Endothelial cell of umbilical vein (primary cell): ENCODE measurements at regions of chr10 and their contacts with region 1.

Region 1: DNA sequence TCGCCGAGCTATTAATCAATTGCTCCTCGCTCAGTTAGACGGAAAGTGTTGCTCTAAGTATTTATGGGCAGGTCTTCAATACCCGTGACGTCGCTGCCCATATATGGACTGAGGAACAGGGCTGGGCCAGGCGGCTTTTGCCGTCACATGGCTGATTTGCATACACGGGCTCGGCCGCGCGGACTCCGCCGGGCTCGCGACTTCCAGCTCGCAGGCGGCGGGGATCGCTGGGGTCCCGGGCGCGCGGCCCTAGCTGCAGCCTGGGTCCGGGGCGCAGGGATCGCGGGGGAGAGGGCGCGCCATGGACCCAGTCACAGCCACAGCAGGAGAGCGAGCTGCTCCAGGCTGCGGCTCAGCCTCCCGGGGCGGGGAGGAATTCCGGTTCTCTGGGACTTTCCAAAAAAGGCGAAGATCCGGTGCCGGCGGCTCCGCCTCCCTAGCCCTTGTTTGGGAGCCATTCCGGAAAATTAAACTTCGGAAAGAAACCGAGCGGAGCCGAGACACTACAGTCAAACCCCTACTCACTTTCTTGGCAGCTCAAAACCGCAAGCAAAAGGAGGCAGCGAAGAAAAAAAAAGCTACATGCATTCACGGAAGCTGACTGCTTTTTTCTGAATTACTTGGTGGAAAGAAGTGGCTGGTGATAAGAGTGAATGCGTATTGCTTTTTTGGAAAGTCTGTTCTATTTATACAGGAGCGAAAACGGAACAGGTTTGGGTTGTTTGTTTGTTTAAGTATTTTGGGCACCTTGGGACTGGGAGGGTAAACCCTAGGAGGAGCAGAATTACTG is at the start of gene EGR2:
- DNase-seq: peak; percentile 91
- H3K4me3 ChIP-seq: peak within 1 kb of the TSS; percentile 45 to 91 (median 51)
- H3K27ac ChIP-seq: peak within 1 kb of the TSS; percentile 32
- H3K4me1 ChIP-seq: peaks cover 24% of the 10 kb centered on the region
- H3K27me3 ChIP-seq: peaks cover 50 to 60% of the 10 kb centered on the region in 2 experiments
- CTCF ChIP-seq: no peak
- POLR2A ChIP-seq: no peak
- total RNA-seq, gene EGR2: 0.46 and 0.67 TPM in 2 replicates

Region 2: DNA sequence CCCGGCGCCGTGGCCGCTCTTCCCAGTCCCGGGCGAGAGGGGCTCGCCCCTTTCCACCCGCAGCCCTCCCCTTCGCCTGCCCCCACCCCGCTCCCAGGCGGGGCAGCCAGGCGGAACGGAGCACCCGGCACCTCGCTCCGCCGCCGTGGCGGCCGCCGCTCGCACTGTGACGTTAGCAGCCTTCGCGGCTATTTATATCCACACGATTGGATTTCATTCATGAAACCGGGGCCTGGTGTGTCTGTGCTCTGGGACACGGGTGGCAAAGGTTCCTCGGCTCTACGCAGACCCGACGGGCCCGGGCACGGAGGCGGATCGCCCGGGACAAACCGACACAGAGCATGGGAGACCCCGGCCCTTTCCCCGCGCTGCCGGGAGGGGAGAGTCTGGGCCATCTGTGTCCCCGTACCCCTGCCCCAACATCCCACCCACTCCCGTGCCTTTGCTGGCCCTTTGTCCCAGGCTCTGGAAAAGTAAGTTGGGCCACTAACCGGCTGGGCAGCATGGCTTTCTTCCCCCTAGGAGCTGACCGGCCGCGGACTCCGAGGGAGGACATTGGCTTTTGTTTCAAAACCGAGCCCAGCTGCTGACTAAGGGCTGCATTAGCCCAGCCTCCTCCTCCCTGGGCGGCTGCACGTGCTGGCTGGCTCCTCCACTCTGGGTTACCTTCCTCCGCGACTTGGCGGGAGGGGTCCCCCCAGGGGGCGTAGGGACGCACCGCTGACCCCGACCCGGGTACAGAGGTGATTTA is 1872.2 kb before region 1 on chr10 and contains the start of gene RHOBTB1:
- CTCF ChIA-PET with region 1: no interaction called
- POLR2A ChIA-PET with region 1: no interaction called
- dilution Hi-C with region 1: no loop called
- intact Hi-C with region 1: loop called (anchors 5 kb)
- DNase-seq: peak; percentile 85
- H3K4me3 ChIP-seq: peak within 1 kb of the TSS; percentile 74 to 91 (median 86)
- H3K27ac ChIP-seq: peak within 1 kb of the TSS; percentile 98
- H3K4me1 ChIP-seq: peaks cover 18% of the 10 kb centered on the region
- H3K27me3 ChIP-seq: no peaks in the 10 kb centered on the region
- CTCF ChIP-seq: no peak
- POLR2A ChIP-seq: peak; percentile 71
- total RNA-seq, gene RHOBTB1: 31.0 and 31.3 TPM in 2 replicates

Region 3: DNA sequence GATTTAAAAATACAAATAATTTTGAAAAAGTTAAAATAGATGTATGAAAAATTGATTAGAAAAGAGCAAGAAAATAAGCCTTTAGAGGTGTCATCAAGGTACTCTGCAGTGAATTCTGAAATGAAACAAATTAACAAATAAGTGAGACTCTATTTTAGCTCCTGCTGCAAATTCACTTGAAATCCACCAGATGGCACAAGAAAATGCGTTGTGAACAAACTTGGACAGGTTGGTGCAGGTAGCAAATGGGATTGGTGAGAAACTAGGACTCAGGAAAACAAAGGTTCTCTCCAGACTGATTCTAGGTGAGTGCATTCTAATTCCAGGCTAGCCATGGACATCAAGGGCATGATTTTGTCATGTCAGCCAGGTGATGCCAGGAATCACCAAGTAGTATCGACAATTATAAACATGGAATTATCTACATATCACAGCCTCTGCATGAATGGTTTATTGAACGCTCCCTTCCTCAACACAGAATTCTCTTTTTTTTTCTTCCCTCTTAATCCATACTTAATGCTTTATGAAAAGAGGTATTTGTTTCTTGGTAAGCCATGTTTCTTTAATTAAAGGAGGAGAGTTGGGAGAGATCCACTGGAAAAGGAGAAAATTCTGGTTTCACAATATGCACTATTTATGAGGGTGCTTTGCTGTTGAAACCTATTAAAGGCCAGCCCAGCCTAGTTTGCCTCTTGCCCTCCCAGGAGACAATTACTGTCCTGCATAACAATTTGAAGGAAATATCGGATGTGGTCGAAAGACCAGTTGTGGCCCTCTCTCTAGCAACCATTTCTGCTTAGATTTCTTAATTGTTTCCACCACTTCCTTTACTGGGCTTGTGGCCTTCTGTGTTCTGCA is 324.3 kb before region 1 on chr10:
- CTCF ChIA-PET with region 1: interaction called, 6 read pairs
- POLR2A ChIA-PET with region 1: no interaction called
- dilution Hi-C with region 1: no loop called
- intact Hi-C with region 1: loop called (anchors 5 kb)
- DNase-seq: peak; percentile 6
- H3K4me3 ChIP-seq: no peak overlapping the region
- H3K27ac ChIP-seq: no peak overlapping the region
- H3K4me1 ChIP-seq: no peaks in the 10 kb centered on the region
- H3K27me3 ChIP-seq: no peaks in the 10 kb centered on the region
- CTCF ChIP-seq: peak in 1 of 2 donors; percentile 30
- POLR2A ChIP-seq: no peak

Region 4: GRCh38 chr10:62610649-62611229 is 205.8 kb before region 1 on chr10:
- CTCF ChIA-PET with region 1: interaction called, 232 read pairs
- POLR2A ChIA-PET with region 1: no interaction called
- dilution Hi-C with region 1: no loop called
- intact Hi-C with region 1: loop called (anchors 1 kb)
- DNase-seq: peak; percentile 41
- H3K4me3 ChIP-seq: no peak overlapping the region
- H3K27ac ChIP-seq: no peak overlapping the region
- H3K4me1 ChIP-seq: no peaks in the 10 kb centered on the region
- H3K27me3 ChIP-seq: peaks cover 2 to 5% of the 10 kb centered on the region in 2 experiments
- CTCF ChIP-seq: peak; percentile 56 to 82
- POLR2A ChIP-seq: no peak

Region 5: DNA sequence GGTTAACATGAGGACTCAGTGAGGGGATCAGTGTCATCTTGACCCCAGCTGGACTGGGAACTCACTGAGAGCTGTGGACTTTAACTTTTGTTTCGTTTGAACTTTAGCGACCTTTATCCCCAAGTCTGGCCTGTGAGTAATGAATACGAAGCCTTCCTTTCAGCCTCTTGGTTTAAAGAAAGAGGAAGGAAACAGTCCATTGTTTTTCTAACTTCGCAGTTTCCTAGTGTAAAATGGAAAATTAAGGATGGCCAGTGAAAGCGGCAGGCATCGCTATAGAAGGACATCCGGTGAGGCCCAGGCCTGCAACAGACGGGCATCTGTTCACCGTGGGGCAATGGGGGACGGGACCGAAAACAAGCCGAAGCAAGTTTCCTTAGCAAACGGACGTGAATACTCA is 56.1 kb before region 1 on chr10:
- CTCF ChIA-PET with region 1: interaction called, 4 read pairs
- POLR2A ChIA-PET with region 1: interaction called, 4 read pairs
- dilution Hi-C with region 1: no loop called
- intact Hi-C with region 1: loop called (anchors 1 kb)
- DNase-seq: peak; percentile 83
- H3K4me3 ChIP-seq: no peak overlapping the region
- H3K27ac ChIP-seq: peak overlapping the region; percentile 55
- H3K4me1 ChIP-seq: peaks cover 17% of the 10 kb centered on the region
- H3K27me3 ChIP-seq: peaks cover 0 to 5% of the 10 kb centered on the region in 2 experiments
- CTCF ChIP-seq: no peak
- POLR2A ChIP-seq: no peak

Region 6: GRCh38 chr10:62916141-62916603 is 99.6 kb after region 1 on chr10:
- CTCF ChIA-PET with region 1: no interaction called
- POLR2A ChIA-PET with region 1: no interaction called
- dilution Hi-C with region 1: no loop called
- intact Hi-C with region 1: no loop called
- DNase-seq: no peak
- H3K4me3 ChIP-seq: no peak overlapping the region
- H3K27ac ChIP-seq: no peak overlapping the region
- H3K4me1 ChIP-seq: no peaks in the 10 kb centered on the region
- H3K27me3 ChIP-seq: no peaks in the 10 kb centered on the region
- CTCF ChIP-seq: no peak
- POLR2A ChIP-seq: no peak

Region 7: GRCh38 chr10:63133056-63133820 is 316.7 kb after region 1 on chr10 and contains the start of gene NRBF2:
- CTCF ChIA-PET with region 1: interaction called, 6 read pairs
- POLR2A ChIA-PET with region 1: no interaction called
- dilution Hi-C with region 1: no loop called
- intact Hi-C with region 1: loop called (anchors 1 kb)
- DNase-seq: peak; percentile 98
- H3K4me3 ChIP-seq: peak within 1 kb of the TSS; percentile 48 to 73 (median 69)
- H3K27ac ChIP-seq: peak within 1 kb of the TSS; percentile 78
- H3K4me1 ChIP-seq: peaks cover 7% of the 10 kb centered on the region
- H3K27me3 ChIP-seq: no peaks in the 10 kb centered on the region
- CTCF ChIP-seq: peak; percentile 10 to 24
- POLR2A ChIP-seq: peak; percentile 97
- total RNA-seq, gene NRBF2: 17.0 and 17.7 TPM in 2 replicates